ENCODE measurements at regions of chr11 and their contacts with region 1.

Region 1: GRCh38 chr11:108593214-108593922 is at the start of gene EXPH5:
- DNase-seq: peak; percentile 95
- H3K4me3 Mint-ChIP-seq: peak within 1 kb of the TSS; percentile 88
- H3K27ac Mint-ChIP-seq: peak within 1 kb of the TSS; percentile 54
- H3K4me1 Mint-ChIP-seq: peaks cover 13% of the 10 kb centered on the region
- H3K27me3 Mint-ChIP-seq: peaks cover 3% of the 10 kb centered on the region
- total RNA-seq, gene EXPH5: 2.9 to 3.3 TPM

Region 2: DNA sequence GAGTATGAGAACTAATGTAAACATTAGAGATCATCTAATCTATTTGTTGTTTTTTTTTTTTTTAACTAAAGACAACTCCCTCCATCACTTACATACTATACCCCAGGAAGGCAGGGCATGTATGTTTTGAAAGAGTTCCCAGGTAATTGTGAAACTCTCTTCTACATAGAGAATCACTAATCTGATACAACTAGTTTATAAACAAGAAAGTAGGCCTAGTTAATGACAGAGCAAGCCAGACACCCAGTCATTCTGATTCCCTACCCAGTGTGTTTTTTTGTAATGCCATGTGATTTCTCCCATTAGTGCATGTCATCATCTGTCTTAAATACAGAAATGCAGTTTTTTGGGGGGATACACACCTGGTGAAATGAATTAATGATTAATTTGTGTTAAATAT is 246.9 kb before region 1 on chr11:
- CTCF ChIA-PET with region 1: no interaction called
- intact Hi-C with region 1: loop called (anchors 5 kb)
- DNase-seq: no peak
- H3K4me3 Mint-ChIP-seq: no peak overlapping the region
- H3K27ac Mint-ChIP-seq: no peak overlapping the region
- H3K4me1 Mint-ChIP-seq: peaks cover 23% of the 10 kb centered on the region
- H3K27me3 Mint-ChIP-seq: no peaks in the 10 kb centered on the region

Region 3: DNA sequence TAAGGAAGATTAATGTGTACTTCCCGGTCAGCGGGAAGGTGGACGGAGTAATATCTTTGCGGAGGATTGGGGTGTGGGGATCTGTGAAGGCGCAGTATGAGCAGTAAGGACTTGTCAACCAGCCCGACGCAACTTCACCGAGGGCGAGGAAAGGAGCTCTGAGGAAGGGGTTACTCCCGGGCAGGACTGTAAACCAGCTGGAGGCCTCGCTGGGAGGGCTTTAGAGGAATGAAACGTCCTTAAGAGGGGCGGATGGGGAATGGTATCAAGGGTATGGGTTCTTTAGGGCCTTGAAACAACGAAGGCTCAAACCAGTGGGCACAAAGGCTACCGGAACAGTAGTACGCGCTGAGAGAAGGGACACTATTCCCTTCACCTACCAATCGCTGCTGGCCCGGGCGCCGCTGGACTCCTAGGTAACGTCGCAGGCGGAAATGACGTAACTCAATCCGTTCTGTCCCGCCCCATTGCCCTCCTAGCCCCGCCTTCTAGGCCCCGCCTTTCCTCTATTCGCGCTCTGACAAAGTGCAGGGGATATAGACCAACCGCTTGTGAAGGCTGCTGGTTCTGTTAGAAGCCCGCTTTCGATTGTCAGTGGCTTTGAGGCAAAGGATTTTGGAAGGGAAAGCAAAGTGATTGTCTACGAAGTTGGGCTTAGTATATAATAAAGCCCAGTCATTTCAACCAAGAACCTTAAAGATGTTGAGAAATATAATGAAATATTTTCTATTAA is 126.1 kb before region 1 on chr11 and contains the start of gene C11orf65:
- CTCF ChIA-PET with region 1: no interaction called
- intact Hi-C with region 1: loop called (anchors 1 kb)
- DNase-seq: peak; percentile 98
- H3K4me3 Mint-ChIP-seq: peak within 1 kb of the TSS; percentile 94
- H3K27ac Mint-ChIP-seq: peak within 1 kb of the TSS; percentile 96
- H3K4me1 Mint-ChIP-seq: peaks cover 8% of the 10 kb centered on the region
- H3K27me3 Mint-ChIP-seq: no peaks in the 10 kb centered on the region
- total RNA-seq, gene C11orf65: 2.2 to 3.1 TPM

Region 4: DNA sequence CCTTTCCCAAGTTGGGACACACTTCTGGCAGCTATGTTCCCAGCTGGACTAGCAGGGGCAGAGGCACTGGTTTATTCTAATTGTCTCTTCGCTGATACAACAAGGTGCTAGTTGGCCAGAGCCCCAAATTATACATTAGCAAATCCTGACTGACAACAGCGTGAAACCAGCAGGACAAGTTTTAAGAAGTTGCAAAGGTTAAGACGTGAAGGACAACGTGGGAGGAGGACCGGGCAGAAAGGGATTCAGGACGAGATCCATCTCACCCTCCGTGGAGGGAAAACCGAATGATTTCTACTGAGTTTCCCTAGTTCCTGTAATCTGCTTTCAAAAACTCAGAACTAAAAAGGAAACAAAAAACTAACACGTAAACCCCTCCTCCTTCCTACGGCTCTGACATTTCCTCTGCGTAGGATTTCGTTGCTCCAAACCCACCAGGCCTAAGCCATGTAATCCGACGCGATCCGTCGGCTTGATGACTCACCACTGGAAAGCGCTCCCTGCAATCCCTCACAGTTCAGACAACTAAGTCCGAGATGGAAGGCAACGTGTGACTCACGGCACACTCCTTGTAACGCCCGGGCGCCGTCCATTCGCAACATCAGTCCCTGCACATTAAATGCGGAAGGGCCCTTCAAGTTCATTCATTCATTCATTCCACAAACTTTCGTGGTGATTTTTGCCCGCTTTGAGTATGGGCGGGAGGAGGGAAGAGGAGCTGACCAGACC is 95.9 kb before region 1 on chr11:
- CTCF ChIA-PET with region 1: no interaction called
- intact Hi-C with region 1: loop called (anchors 1 kb)
- DNase-seq: peak; percentile 84
- H3K4me3 Mint-ChIP-seq: peak overlapping the region; percentile 85
- H3K27ac Mint-ChIP-seq: peak overlapping the region; percentile 92
- H3K4me1 Mint-ChIP-seq: peaks cover 16% of the 10 kb centered on the region
- H3K27me3 Mint-ChIP-seq: no peaks in the 10 kb centered on the region

Region 5: DNA sequence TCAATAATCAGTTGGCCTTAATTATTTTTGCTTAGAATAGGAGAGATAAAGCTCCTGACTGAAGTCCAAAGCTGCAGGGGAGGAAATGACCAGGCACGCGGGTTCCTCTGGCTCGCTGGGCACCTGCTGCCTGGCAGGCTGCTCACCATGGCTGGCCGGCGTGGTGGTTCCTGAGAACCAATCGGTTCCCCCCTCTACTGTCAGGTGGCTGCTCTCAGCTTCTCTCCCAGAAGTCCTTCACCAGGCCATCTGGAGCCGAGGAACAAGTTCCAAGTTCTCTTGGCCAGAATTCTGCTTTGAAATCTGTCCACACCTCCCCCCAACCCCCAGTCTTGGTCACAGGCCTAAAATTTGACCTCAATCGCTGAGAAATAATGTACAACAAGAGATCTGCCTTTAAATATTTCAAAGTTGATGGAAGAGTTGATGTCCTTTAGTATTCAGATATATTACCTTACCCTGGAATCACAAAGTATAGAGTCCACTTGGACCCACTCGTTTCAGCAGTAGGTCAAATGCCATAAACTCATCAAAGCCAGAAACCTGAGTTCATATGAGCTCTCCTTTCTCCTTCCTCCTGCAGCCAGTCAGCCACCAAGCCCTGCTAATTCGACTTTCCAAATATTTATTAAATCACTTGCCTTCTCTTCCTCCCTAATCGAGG is 25.0 kb before region 1 on chr11:
- CTCF ChIA-PET with region 1: interaction called, 4 read pairs
- intact Hi-C with region 1: loop called (anchors 1 kb)
- DNase-seq: no peak
- H3K4me3 Mint-ChIP-seq: no peak overlapping the region
- H3K27ac Mint-ChIP-seq: no peak overlapping the region
- H3K4me1 Mint-ChIP-seq: no peaks in the 10 kb centered on the region
- H3K27me3 Mint-ChIP-seq: no peaks in the 10 kb centered on the region

Region 6: DNA sequence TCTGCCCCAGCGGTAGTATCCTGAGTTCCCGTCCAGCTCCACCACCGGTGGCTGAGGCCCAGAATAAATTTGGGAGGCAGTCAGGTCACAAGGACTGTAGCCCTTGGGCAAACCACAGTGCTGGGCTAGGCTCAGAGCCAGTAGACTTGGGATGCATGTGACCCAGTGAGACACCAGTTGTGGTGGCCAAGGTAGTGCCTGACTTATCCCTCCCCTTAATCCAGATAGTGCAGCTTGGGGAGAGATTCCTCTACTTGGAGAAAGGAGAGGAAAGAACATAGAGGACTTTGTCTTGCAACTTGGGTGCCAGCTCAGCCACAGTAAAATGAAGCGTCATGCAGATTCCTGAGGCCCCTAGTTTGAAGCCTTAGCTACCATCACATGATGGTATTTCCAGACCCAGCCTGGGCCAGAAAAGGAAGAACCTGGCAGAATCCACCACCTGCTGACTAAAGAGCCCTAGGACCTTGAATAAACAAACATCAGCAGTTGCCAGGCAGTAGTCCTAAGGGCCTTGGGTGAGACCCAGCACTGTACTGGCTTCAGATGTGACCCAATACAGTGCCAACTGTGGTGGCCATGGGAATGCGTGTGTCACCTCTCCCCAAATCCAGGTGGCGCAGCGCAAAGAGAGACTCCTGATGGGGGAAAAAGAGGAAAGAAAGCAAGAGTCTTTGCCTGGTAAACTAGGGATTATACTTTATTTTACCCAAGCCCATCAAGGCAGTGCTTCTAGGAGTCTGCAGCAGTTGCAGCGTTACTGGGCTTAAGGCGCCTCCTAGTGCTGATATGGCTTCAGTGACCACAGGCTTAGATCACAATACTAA is 54.5 kb after region 1 on chr11:
- CTCF ChIA-PET with region 1: interaction called, 3 read pairs
- intact Hi-C with region 1: loop called (anchors 2 kb)
- DNase-seq: peak; percentile 86
- H3K4me3 Mint-ChIP-seq: no peak overlapping the region
- H3K27ac Mint-ChIP-seq: no peak overlapping the region
- H3K4me1 Mint-ChIP-seq: no peaks in the 10 kb centered on the region
- H3K27me3 Mint-ChIP-seq: no peaks in the 10 kb centered on the region

Region 7: GRCh38 chr11:108664730-108665525 is 71.6 kb after region 1 on chr11 and contains the start of gene DDX10:
- CTCF ChIA-PET with region 1: no interaction called
- intact Hi-C with region 1: loop called (anchors 1 kb)
- DNase-seq: peak; percentile 99
- H3K4me3 Mint-ChIP-seq: peak within 1 kb of the TSS; percentile 99
- H3K27ac Mint-ChIP-seq: peak within 1 kb of the TSS; percentile 86
- H3K4me1 Mint-ChIP-seq: peaks cover 38% of the 10 kb centered on the region
- H3K27me3 Mint-ChIP-seq: no peaks in the 10 kb centered on the region
- total RNA-seq, gene DDX10: 36.6 to 43.0 TPM

Region 8: DNA sequence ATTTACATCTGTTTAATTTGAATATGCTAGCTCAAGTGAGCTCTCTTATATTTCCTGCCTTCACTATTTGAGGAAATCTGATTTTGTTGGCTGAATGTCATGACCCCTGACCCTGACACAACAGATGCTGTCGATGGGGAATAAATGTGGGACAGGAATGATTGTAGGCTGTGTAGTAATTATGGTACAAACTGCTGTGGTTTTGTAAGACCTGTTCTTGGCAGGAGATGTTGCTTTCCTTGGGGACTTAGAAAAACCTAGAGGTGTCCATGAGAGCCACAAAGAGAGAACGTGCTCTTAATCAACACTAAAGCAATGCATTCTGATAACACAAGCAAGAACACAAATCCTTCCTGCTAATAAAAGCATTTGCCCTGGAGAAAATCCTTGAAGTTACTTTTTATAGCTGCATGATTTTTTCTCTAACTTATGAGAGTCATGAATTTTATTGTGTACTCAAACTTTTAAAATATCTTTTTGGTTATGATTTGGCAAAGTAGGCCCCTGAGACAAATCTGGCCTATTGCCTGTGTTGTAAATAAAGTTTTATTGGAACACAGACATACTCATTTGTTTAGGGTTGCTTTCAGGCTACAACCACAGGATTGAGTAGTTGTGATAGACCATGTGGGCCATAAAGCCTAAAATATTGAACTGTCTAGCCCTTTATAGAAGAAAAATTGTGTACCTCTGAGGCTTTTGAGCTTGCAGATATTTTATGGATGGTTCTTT is 161.7 kb after region 1 on chr11:
- CTCF ChIA-PET with region 1: no interaction called
- intact Hi-C with region 1: no loop called
- DNase-seq: no peak
- H3K4me3 Mint-ChIP-seq: no peak overlapping the region
- H3K27ac Mint-ChIP-seq: no peak overlapping the region
- H3K4me1 Mint-ChIP-seq: peaks cover 43% of the 10 kb centered on the region
- H3K27me3 Mint-ChIP-seq: no peaks in the 10 kb centered on the region

Measured in activated naive CD4-positive, alpha-beta T cell treated with anti-CD3 and anti-CD28 coated beads for 36 hours (primary cell).